ENCODE measurements at regions of chr19 and their contacts with region 1.

Region 1: GRCh38 chr19:29665215-29665825 is at the start of gene PLEKHF1:
- DNase-seq: peak; percentile 82
- H3K4me3 Mint-ChIP-seq: peak within 1 kb of the TSS; percentile 76
- H3K27ac Mint-ChIP-seq: no peak within 1 kb of the TSS
- H3K4me1 Mint-ChIP-seq: peaks cover 16% of the 10 kb centered on the region
- H3K27me3 Mint-ChIP-seq: no peaks in the 10 kb centered on the region
- CTCF ChIP-seq: no peak
- total RNA-seq, gene PLEKHF1: 2.9 and 9.6 TPM in 2 replicates

Region 2: GRCh38 chr19:29645911-29646310 is 19.4 kb before region 1 on chr19:
- CTCF ChIA-PET with region 1: interaction called, 3 read pairs
- POLR2A ChIA-PET with region 1: interaction called, 12 read pairs
- intact Hi-C with region 1: loop called (anchors 1 kb)
- DNase-seq: peak; percentile 89
- H3K4me3 Mint-ChIP-seq: peak overlapping the region; percentile 55
- H3K27ac Mint-ChIP-seq: peak overlapping the region; percentile 46
- H3K4me1 Mint-ChIP-seq: peaks cover 20% of the 10 kb centered on the region
- H3K27me3 Mint-ChIP-seq: peaks cover 14% of the 10 kb centered on the region
- CTCF ChIP-seq: no peak

Region 3: GRCh38 chr19:29687244-29687896 is 22.1 kb after region 1 on chr19:
- CTCF ChIA-PET with region 1: no interaction called
- POLR2A ChIA-PET with region 1: no interaction called
- intact Hi-C with region 1: loop called (anchors 2 kb)
- DNase-seq: peak; percentile 96
- H3K4me3 Mint-ChIP-seq: peak overlapping the region; percentile 29
- H3K27ac Mint-ChIP-seq: peak overlapping the region; percentile 89
- H3K4me1 Mint-ChIP-seq: peaks cover 34% of the 10 kb centered on the region
- H3K27me3 Mint-ChIP-seq: no peaks in the 10 kb centered on the region
- CTCF ChIP-seq: no peak

Region 4: GRCh38 chr19:29724102-29724641 is 58.9 kb after region 1 on chr19:
- CTCF ChIA-PET with region 1: no interaction called
- POLR2A ChIA-PET with region 1: no interaction called
- intact Hi-C with region 1: no loop called
- DNase-seq: no peak
- H3K4me3 Mint-ChIP-seq: no peak overlapping the region
- H3K27ac Mint-ChIP-seq: no peak overlapping the region
- H3K4me1 Mint-ChIP-seq: no peaks in the 10 kb centered on the region
- H3K27me3 Mint-ChIP-seq: no peaks in the 10 kb centered on the region
- CTCF ChIP-seq: no peak

Region 5: DNA sequence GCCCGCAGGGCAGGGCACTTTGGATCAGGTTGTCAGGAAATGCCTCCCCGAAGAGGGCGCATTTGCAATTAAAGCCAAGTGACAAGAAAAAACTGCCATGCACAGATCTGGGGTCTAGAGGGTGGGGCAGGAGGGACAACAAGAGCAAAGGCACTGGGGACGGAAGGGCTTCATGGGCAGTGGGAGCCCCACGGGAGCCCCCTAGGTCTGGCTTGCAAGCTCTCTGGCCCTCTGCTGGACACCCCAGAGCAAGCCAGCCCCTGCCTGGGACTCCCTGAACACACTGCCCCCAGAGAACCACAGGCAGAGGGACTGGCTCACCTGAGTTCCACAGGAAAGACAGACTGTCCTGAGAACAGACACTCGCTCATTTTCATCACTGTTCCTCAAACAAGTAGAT is 79.9 kb after region 1 on chr19:
- CTCF ChIA-PET with region 1: no interaction called
- POLR2A ChIA-PET with region 1: no interaction called
- intact Hi-C with region 1: no loop called
- DNase-seq: no peak
- H3K4me3 Mint-ChIP-seq: no peak overlapping the region
- H3K27ac Mint-ChIP-seq: no peak overlapping the region
- H3K4me1 Mint-ChIP-seq: no peaks in the 10 kb centered on the region
- H3K27me3 Mint-ChIP-seq: peaks cover 26% of the 10 kb centered on the region
- CTCF ChIP-seq: peak; percentile 9